ENCODE measurements at regions of chr3 and their contacts with region 1.

Region 1: GRCh38 chr3:72847751-72848702 is at the start of gene SHQ1:
- DNase-seq: peak; percentile 93
- ATAC-seq: peak; percentile 88
- H3K4me3 ChIP-seq: peak within 1 kb of the TSS; percentile 90
- H3K27ac ChIP-seq: peak within 1 kb of the TSS; percentile 65
- H3K4me1 ChIP-seq: no peaks in the 10 kb centered on the region; the same call in 1 of the 2 replicates
- H3K27me3 ChIP-seq: no peaks in the 10 kb centered on the region
- CTCF ChIP-seq: no peak
- POLR2A ChIP-seq: peak; percentile 31; the same call in 1 of the 2 replicates
- RAD21 ChIP-seq: no peak; the same call in 1 of the 2 replicates
- total RNA-seq, gene SHQ1: 19.4 and 28.6 TPM in 2 replicates

Region 2: GRCh38 chr3:72887705-72888545 is 39.9 kb after region 1 on chr3 and contains the start of gene GXYLT2:
- CTCF ChIA-PET with region 1: interaction called, 3 read pairs
- POLR2A ChIA-PET with region 1: interaction called, 5 read pairs
- dilution Hi-C with region 1: no loop called
- in situ Hi-C with region 1: no loop called
- intact Hi-C with region 1: loop called (anchors 2 kb)
- DNase-seq: peak; percentile 71
- ATAC-seq: peak; percentile 78
- H3K4me3 ChIP-seq: peak within 1 kb of the TSS; percentile 53
- H3K27ac ChIP-seq: peak within 1 kb of the TSS; percentile 76
- H3K4me1 ChIP-seq: peaks cover 21% of the 10 kb centered on the region
- H3K27me3 ChIP-seq: no peaks in the 10 kb centered on the region
- CTCF ChIP-seq: 0 out of 2 replicates have a peak, but pooled peaks have one; percentile 12
- POLR2A ChIP-seq: no peak
- RAD21 ChIP-seq: no peak
- total RNA-seq, gene GXYLT2: 11.1 and 11.4 TPM in 2 replicates

Region 3: GRCh38 chr3:73056014-73056844 is 208.2 kb after region 1 on chr3:
- CTCF ChIA-PET with region 1: interaction called, 4 read pairs
- POLR2A ChIA-PET with region 1: no interaction called
- dilution Hi-C with region 1: no loop called
- in situ Hi-C with region 1: no loop called
- intact Hi-C with region 1: loop called (anchors 1 kb)
- DNase-seq: peak; percentile 62
- ATAC-seq: peak; percentile 65
- H3K4me3 ChIP-seq: no peak overlapping the region
- H3K27ac ChIP-seq: no peak overlapping the region
- H3K4me1 ChIP-seq: no peaks in the 10 kb centered on the region; the same call in 1 of the 2 replicates
- H3K27me3 ChIP-seq: no peaks in the 10 kb centered on the region
- CTCF ChIP-seq: peak; percentile 59
- POLR2A ChIP-seq: no peak
- RAD21 ChIP-seq: peak; percentile 74

Region 4: DNA sequence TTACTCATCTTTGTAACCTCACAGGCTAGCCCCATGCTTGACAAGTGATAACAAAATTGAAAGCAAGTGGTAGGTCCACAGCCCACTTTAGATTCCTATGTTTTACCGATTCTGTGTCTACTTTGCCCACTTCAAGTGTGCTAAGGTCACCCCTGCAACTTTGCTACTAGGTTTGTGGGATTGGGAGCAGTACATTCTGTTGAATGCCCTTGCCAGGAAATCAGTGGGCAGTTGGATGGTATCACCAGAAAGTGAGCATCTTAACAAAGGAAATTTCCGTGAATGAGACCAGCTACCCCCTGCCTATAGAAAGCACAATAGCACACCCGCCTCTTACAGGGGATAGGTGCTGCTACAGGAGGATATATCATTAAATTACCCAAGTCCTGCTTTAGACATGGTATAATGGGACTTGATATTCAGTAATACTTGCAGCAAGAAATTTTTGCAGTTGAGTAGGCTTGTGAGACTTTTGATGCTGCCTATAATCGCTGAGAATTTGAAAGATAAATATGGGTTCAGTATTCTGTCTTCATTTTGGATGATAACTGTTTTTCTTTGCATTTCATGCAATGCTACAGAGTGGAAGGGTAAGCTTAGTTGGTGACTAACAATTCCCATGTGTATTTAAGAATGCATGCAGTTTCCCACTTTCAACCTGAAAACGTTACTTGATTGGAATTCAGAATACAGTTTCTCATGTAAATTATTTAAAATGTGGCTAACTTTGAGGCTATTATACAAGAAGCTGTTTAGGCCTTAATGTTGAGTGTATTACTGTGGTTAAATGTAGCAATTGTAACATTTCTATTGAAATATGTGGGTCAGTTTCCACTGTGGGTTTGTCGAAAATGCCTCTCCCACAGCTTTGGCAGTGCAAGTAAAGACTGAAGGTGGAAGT is 222.9 kb after region 1 on chr3:
- CTCF ChIA-PET with region 1: no interaction called
- POLR2A ChIA-PET with region 1: no interaction called
- dilution Hi-C with region 1: no loop called
- in situ Hi-C with region 1: loop called (anchors 5 kb)
- intact Hi-C with region 1: loop called (anchors 5 kb)
- DNase-seq: peak; percentile 92
- ATAC-seq: peak; percentile 81
- H3K4me3 ChIP-seq: no peak overlapping the region
- H3K27ac ChIP-seq: peak overlapping the region; percentile 61
- H3K4me1 ChIP-seq: peaks cover 22% of the 10 kb centered on the region
- H3K27me3 ChIP-seq: no peaks in the 10 kb centered on the region
- CTCF ChIP-seq: no peak
- POLR2A ChIP-seq: no peak
- RAD21 ChIP-seq: no peak

Measured in IMR-90 (cell line).